GM12878 (cell line): ENCODE measurements at regions of chr21 and their contacts with region 1.

Region 1: GRCh38 chr21:36319765-36320420 is at the start of gene MORC3:
- DNase-seq: peak; percentile 98
- ATAC-seq: peak; percentile 92
- H3K4me3 ChIP-seq: peak within 1 kb of the TSS; percentile 81
- H3K27ac ChIP-seq: peak within 1 kb of the TSS; percentile 81
- H3K4me1 ChIP-seq: peaks cover 9% of the 10 kb centered on the region
- H3K27me3 ChIP-seq: no peaks in the 10 kb centered on the region; a peak in 1 of 4 replicates
- CTCF ChIP-seq: no peak
- EP300 ChIP-seq: 0 out of 4 replicates have a peak, but pooled peaks of 1 of the 2 experiments have one; percentile 16
- POLR2A ChIP-seq: peak; percentile 98
- RAD21 ChIP-seq: 0 out of 2 replicates have a peak, but pooled peaks have one; percentile 0
- polyA plus RNA-seq, gene MORC3: 5.5 to 7.1 TPM

Region 2: DNA sequence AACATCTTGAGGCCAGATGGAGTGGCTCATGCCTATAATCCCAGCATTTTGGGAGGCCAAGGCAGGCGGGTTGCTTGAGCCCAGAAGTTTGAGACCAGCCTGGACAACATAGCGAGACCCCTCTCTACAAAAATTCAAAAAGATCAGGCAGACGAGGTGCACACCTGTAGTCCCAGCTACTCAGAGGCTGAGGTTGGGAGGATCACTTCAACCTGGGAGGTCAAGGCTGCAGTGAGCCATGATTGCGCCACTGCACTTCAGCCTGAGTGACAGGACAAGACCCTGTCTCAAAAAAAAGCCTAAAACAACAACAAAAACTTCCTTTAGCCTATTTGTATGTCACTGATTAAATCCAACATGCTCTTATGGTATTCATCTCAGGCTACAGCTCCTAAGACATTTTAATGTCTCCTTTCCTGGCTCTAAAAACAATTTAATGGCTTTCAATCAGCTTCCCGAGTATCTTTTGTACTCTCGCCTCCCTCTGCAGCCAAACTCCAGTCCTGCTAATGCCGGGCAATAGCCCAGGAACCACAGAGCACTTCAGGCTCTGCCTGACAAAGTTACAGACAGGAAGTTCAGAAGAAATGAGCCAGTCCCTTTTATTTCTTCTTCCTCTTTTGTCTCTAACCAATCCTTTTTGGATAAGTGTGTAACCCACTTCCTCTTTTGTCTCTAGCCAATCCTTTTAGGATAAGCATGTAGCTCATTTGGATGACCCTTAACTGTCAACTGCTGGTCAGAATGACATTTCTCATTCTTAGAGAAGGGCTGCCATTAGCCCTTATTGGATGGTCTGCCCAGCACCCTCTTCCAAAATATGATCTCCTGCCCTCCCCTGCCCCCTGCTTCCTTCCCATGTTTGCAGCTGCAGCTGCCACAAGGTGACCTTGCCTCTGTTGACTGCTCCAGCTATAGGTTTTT is 169.8 kb before region 1 on chr21:
- CTCF ChIA-PET with region 1: interaction called, 13 read pairs
- POLR2A ChIA-PET with region 1: interaction called, 4 read pairs
- RAD21 ChIA-PET with region 1: interaction called, 5 read pairs
- SMC1A ChIA-PET with region 1: interaction called, 9 read pairs
- in situ Hi-C with region 1: no loop called
- intact Hi-C with region 1: no loop called
- DNase-seq: peak; percentile 42
- ATAC-seq: peak; percentile 92
- H3K4me3 ChIP-seq: no peak overlapping the region
- H3K27ac ChIP-seq: no peak overlapping the region
- H3K4me1 ChIP-seq: peaks cover 10% of the 10 kb centered on the region
- H3K27me3 ChIP-seq: no peaks in the 10 kb centered on the region
- CTCF ChIP-seq: no peak
- EP300 ChIP-seq: no peak
- POLR2A ChIP-seq: peak; percentile 67
- RAD21 ChIP-seq: no peak

Region 3: DNA sequence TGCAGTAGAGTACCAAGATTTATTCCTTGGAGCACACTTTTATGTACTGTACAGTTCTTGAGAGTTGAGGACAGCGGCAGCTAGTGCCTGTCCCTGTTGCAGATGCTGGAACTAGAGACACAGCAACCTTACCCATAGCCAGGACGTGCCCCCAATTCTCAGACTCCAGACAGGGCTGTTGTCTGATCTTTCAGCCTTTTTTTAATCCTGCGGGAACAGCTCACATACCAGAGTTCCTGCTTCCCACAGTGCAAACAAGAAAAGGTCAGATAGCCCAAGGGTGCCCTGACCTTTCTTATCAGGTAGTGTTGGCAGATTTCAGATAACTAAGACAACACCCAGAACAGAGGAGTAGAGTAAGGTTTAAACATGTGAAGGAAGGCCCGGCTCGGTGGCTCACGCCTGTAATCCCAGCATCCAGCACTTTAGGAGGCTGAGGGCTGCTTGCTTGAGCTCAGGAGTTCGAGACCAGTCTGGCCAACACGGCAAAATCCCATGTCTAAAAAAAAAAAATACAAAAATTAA is 84.8 kb before region 1 on chr21:
- CTCF ChIA-PET with region 1: interaction called, 4 read pairs
- POLR2A ChIA-PET with region 1: interaction called, 3 read pairs
- RAD21 ChIA-PET with region 1: interaction called, 5 read pairs
- SMC1A ChIA-PET with region 1: interaction called, 12 read pairs
- in situ Hi-C with region 1: no loop called
- intact Hi-C with region 1: loop called (anchors 5 kb)
- DNase-seq: no peak
- ATAC-seq: no peak
- H3K4me3 ChIP-seq: no peak overlapping the region
- H3K27ac ChIP-seq: no peak overlapping the region
- H3K4me1 ChIP-seq: peaks cover 6% of the 10 kb centered on the region
- H3K27me3 ChIP-seq: no peaks in the 10 kb centered on the region
- CTCF ChIP-seq: no peak
- EP300 ChIP-seq: no peak
- POLR2A ChIP-seq: no peak
- RAD21 ChIP-seq: no peak

Region 4: GRCh38 chr21:36288651-36289243 is 31.1 kb before region 1 on chr21:
- CTCF ChIA-PET with region 1: interaction called, 5 read pairs
- POLR2A ChIA-PET with region 1: interaction called, 16 read pairs
- RAD21 ChIA-PET with region 1: interaction called, 41 read pairs
- SMC1A ChIA-PET with region 1: interaction called, 31 read pairs
- in situ Hi-C with region 1: no loop called
- intact Hi-C with region 1: loop called (anchors 2 kb)
- DNase-seq: no peak
- ATAC-seq: peak; percentile 59
- H3K4me3 ChIP-seq: peak overlapping the region; percentile 37; the same call in 1 of the 2 replicates
- H3K27ac ChIP-seq: peak overlapping the region; percentile 35
- H3K4me1 ChIP-seq: peaks cover 16% of the 10 kb centered on the region
- H3K27me3 ChIP-seq: no peaks in the 10 kb centered on the region
- CTCF ChIP-seq: no peak
- EP300 ChIP-seq: no peak
- POLR2A ChIP-seq: no peak
- RAD21 ChIP-seq: no peak

Region 5: GRCh38 chr21:36330904-36331303 is 11.0 kb after region 1 on chr21:
- CTCF ChIA-PET with region 1: interaction called, 11 read pairs
- POLR2A ChIA-PET with region 1: interaction called, 3 read pairs
- RAD21 ChIA-PET with region 1: interaction called, 5 read pairs
- SMC1A ChIA-PET with region 1: interaction called, 32 read pairs
- in situ Hi-C with region 1: no loop called
- intact Hi-C with region 1: no loop called
- DNase-seq: peak; percentile 16
- ATAC-seq: peak; percentile 97
- H3K4me3 ChIP-seq: no peak overlapping the region
- H3K27ac ChIP-seq: no peak overlapping the region
- H3K4me1 ChIP-seq: 0 out of 2 replicates have a peak, but pooled peaks cover 3% of the 10 kb centered on the region
- H3K27me3 ChIP-seq: no peaks in the 10 kb centered on the region
- CTCF ChIP-seq: peak; percentile 72 to 79 (median 75); a peak in 5 of 6 replicates
- EP300 ChIP-seq: no peak
- POLR2A ChIP-seq: no peak
- RAD21 ChIP-seq: peak; percentile 87

Region 6: DNA sequence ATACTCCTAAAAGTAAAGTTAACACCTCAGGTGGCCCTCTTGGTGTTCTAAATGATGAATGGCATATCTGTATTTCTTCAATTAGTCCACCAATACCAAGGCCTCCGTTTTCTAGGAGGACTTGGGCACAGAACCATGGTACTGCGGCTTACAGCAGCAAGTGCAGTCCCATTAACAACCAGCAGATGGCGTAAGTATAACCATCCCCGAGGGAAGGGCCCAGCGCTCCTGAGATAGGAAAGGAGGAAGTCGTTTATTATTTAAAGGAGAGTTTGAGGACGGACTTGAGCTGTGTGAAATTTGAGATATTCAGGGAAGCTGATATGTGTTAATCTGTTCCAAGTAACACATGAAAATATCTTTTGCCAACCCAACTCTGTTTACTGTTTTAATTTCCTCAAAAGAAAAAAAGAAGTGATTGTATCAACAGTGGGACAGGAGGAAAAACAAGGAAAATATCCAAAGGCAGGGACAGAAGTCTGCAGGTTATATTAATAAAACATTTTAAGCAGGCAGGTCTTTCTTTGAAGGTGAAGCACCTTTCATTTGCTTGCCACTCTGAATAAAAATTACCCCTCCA is 1899.2 kb after region 1 on chr21:
- CTCF ChIA-PET with region 1: no interaction called
- POLR2A ChIA-PET with region 1: no interaction called
- RAD21 ChIA-PET with region 1: no interaction called
- SMC1A ChIA-PET with region 1: no interaction called
- in situ Hi-C with region 1: no loop called
- intact Hi-C with region 1: no loop called
- DNase-seq: no peak
- ATAC-seq: peak; percentile 76
- H3K4me3 ChIP-seq: no peak overlapping the region
- H3K27ac ChIP-seq: no peak overlapping the region
- H3K4me1 ChIP-seq: no peaks in the 10 kb centered on the region
- H3K27me3 ChIP-seq: no peaks in the 10 kb centered on the region
- CTCF ChIP-seq: peak; percentile 77 to 90 (median 81)
- EP300 ChIP-seq: no peak
- POLR2A ChIP-seq: no peak
- RAD21 ChIP-seq: peak; percentile 75